Right cardiac atrium (tissue), 5 donors: ENCODE measurements at regions of chr7 and their contacts with region 1.

Region 1: GRCh38 chr7:51067757-51068156 is 248.9 kb downstream of the COBL start:
- DNase-seq: peak in 2 of 3 donors; percentile 71 to 82
- ATAC-seq: peak; percentile 34 to 45
- H3K4me3 ChIP-seq: no peak overlapping the region
- H3K27ac ChIP-seq: no peak overlapping the region
- H3K4me1 ChIP-seq: peaks cover 3% of the 10 kb centered on the region
- H3K27me3 ChIP-seq: no peaks in the 10 kb centered on the region

Region 2: GRCh38 chr7:50595491-50596102 is 472.2 kb before region 1 on chr7:
- intact Hi-C with region 1: loop called in 1 of 4 experiments (anchors 10 kb)
- DNase-seq: peak in 2 of 3 donors; percentile 42 to 63
- ATAC-seq: peak; percentile 60 to 71
- H3K4me3 ChIP-seq: no peak overlapping the region
- H3K27ac ChIP-seq: no peak overlapping the region
- H3K4me1 ChIP-seq: no peaks in the 10 kb centered on the region
- H3K27me3 ChIP-seq: no peaks in the 10 kb centered on the region

Region 3: DNA sequence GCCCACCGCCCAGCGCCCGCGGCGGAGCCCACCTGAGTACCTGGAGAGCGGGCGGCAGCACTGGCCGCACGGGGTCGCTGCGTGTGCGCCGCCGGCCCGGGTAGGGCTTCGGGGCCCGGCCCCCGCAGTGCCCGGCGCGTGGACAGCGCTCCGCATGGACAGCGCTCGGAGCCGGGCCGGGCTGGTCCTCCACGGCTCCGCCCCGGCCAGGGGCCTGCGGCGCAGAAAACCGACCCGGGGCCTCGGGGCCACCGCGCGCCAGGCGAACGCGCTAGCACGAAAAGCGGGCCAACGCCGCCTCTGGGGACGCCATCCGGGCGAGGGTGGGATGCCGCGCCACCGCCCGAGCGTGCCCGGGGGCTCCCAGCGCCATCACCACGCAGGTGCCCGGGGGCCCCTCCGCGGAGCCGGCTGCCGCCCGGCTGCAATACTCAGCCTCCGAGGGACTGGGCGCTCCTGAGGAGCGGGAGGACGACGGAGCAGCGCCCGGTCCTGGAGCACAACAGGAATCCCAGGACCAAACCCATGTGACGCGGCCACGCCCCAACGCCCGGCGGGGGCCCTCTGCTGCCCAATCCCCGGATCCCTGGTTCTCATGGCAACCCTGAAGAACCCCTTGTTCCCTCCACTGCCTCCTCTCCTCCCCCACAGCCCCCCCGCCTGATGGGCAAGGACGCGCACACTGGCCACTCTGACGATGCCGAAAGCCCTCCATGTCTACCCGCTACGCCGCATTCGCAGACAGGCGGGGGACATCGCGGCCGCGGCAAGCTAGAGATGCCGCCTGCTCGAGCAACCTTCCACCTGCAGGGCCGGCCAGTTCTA is 285.2 kb before region 1 on chr7 and contains the start of gene GRB10:
- intact Hi-C with region 1: loop called in 1 of 4 experiments (anchors 10 kb)
- DNase-seq: peak; percentile 52 to 82 (median 80)
- ATAC-seq: peak; percentile 75 to 85
- H3K4me3 ChIP-seq: peak within 1 kb of the TSS; percentile 50
- H3K27ac ChIP-seq: no peak within 1 kb of the TSS
- H3K4me1 ChIP-seq: peaks cover 20% of the 10 kb centered on the region
- H3K27me3 ChIP-seq: no peaks in the 10 kb centered on the region
- total RNA-seq, gene GRB10: 52.0 to 86.0 (median 63.9) TPM

Region 4: DNA sequence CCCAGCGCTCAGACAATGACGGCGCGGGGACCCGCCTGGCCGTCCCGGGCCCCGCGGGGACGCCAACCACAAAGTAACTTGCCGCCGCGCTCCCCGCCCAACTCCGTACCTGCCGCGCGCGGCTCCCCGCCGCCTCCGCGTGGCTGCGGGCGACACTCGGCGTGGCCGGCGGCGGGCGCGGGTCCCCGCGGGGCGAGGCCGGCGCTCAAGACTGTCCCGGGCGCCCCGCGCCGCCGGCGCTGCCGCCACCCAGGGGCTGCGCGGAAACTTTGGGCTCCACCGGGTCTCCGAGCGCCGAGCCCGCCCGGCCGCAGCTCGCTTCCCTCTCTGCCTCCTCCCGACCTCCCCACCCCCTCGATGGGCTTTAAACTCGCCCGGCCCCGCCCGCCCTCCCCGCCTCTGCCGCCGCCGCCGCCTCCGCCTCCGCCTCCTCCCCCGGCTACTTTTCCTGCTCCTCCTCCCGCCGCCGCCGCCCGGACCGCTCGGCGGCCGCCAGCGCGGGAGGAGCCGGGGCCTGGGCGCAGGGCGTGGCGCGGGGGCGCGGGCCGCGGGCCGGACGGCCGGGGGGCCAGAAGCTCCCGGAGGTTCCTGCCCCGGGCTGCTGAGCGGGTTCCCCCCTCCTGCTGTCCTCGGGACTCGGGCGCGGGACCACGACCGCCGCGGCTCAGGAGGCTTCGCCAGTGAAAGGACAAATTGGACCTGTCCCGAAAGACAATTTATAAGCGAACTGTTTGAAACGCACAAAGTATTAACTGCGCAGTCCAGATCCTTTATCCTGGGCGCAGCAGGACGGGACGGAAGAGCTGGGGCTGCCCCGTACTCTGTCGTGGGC is 274.4 kb before region 1 on chr7:
- intact Hi-C with region 1: loop called in 3 of 4 experiments (anchors 10 kb)
- DNase-seq: peak; percentile 80 to 92 (median 92)
- ATAC-seq: peak; percentile 89 to 90
- H3K4me3 ChIP-seq: peak overlapping the region; percentile 90
- H3K27ac ChIP-seq: peak overlapping the region; percentile 97
- H3K4me1 ChIP-seq: peaks cover 6% of the 10 kb centered on the region
- H3K27me3 ChIP-seq: no peaks in the 10 kb centered on the region

Region 5: GRCh38 chr7:51123322-51124029 is 55.7 kb after region 1 on chr7:
- intact Hi-C with region 1: no loop called
- DNase-seq: peak in 1 of 3 donors; percentile 36
- ATAC-seq: peak; percentile 47 to 75
- H3K4me3 ChIP-seq: no peak overlapping the region
- H3K27ac ChIP-seq: peak overlapping the region; percentile 6
- H3K4me1 ChIP-seq: peaks cover 2% of the 10 kb centered on the region
- H3K27me3 ChIP-seq: no peaks in the 10 kb centered on the region